ENCODE measurements at regions of chr18 and their contacts with region 1.

Region 1: GRCh38 chr18:59208602-59209125 is 11.3 kb upstream of the GRP start:
- DNase-seq: peak in 1 of 2 donors; percentile 46
- H3K4me3 ChIP-seq: peak overlapping the region in 1 of 3 donors; percentile 11
- H3K27ac ChIP-seq: peak overlapping the region; percentile 71 to 79
- H3K4me1 ChIP-seq: no peaks in the 10 kb centered on the region
- H3K27me3 ChIP-seq: no peaks in the 10 kb centered on the region
- CTCF ChIP-seq: no peak
- POLR2A ChIP-seq: no peak

Region 2: GRCh38 chr18:58511897-58512581 is 696.6 kb before region 1 on chr18:
- intact Hi-C with region 1: loop called (anchors 5 kb)
- DNase-seq: no peak
- H3K4me3 ChIP-seq: no peak overlapping the region
- H3K27ac ChIP-seq: no peak overlapping the region
- H3K4me1 ChIP-seq: no peaks in the 10 kb centered on the region
- H3K27me3 ChIP-seq: no peaks in the 10 kb centered on the region
- CTCF ChIP-seq: no peak
- POLR2A ChIP-seq: no peak

Measured in breast epithelium (tissue), 4 donors.